OCI-LY7 (cell line): ENCODE measurements at regions of chr12 and their contacts with region 1.

Region 1: GRCh38 chr12:51341259-51342007 is 5.0 kb downstream of the CELA1 start:
- DNase-seq: peak; percentile 78
- H3K4me3 ChIP-seq: no peak overlapping the region
- H3K27ac ChIP-seq: no peak overlapping the region
- H3K4me1 ChIP-seq: peaks cover 9% of the 10 kb centered on the region
- CTCF ChIP-seq: peak; percentile 99

Region 2: GRCh38 chr12:50763639-50764285 is 577.7 kb before region 1 on chr12 and contains the start of gene ATF1:
- CTCF ChIA-PET with region 1: no interaction called
- POLR2A ChIA-PET with region 1: interaction called, 3 read pairs
- intact Hi-C with region 1: loop called (anchors 10 kb)
- DNase-seq: peak; percentile 94
- H3K4me3 ChIP-seq: peak within 1 kb of the TSS; percentile 82
- H3K27ac ChIP-seq: peak within 1 kb of the TSS; percentile 84
- H3K4me1 ChIP-seq: peaks cover 32% of the 10 kb centered on the region
- CTCF ChIP-seq: no peak
- total RNA-seq, gene ATF1: 47.4 and 83.3 TPM in 2 replicates

Region 3: DNA sequence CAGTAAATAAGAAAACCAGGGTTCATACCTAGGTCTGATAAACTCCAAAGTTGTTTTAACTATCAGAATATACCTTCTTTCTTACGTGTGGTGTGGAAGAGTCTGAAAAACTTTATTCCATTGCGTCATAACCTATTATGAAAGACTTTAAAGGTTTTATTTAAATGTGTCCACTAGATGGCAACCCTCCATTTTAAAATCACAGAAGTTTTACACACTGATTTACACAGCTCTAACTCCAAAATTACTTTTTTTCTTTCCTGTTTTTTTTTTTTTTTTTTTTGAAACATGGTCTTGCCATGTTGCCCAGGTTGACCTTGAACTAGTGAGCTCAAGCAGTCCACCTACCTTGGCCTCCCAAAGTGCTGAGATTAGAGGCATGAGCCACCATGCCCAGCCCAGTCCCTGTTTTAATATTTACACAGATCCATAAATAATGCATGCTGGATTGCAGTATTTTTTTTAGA is 516.0 kb before region 1 on chr12:
- CTCF ChIA-PET with region 1: no interaction called
- POLR2A ChIA-PET with region 1: no interaction called
- intact Hi-C with region 1: loop called (anchors 5 kb)
- DNase-seq: peak; percentile 76
- H3K4me3 ChIP-seq: no peak overlapping the region
- H3K27ac ChIP-seq: no peak overlapping the region
- H3K4me1 ChIP-seq: no peaks in the 10 kb centered on the region
- CTCF ChIP-seq: peak; percentile 77

Region 4: DNA sequence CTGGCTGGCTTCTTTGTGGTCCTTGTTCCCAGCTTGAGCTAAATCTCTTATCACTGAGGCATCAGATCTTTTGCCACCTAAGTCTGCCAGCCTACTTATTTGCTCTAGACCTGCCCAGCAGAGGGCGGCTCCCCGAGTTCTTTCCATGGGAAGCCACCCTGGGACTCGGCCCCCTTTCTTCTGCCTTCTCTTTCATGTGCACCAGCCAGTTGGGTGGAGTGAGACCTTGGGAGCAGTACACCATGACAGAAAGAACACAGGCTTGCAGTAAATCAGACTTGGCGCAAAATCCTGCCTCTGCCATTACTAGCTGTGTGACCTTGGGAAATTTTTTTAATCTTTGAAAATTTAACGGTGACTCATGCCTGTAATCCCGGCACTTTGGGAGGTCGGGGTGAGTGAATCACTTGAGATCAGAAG is 78.7 kb before region 1 on chr12:
- CTCF ChIA-PET with region 1: interaction called, 16 read pairs
- POLR2A ChIA-PET with region 1: interaction called, 6 read pairs
- intact Hi-C with region 1: loop called (anchors 1 kb)
- DNase-seq: peak; percentile 60
- H3K4me3 ChIP-seq: no peak overlapping the region
- H3K27ac ChIP-seq: no peak overlapping the region
- H3K4me1 ChIP-seq: no peaks in the 10 kb centered on the region
- CTCF ChIP-seq: peak; percentile 76

Region 5: DNA sequence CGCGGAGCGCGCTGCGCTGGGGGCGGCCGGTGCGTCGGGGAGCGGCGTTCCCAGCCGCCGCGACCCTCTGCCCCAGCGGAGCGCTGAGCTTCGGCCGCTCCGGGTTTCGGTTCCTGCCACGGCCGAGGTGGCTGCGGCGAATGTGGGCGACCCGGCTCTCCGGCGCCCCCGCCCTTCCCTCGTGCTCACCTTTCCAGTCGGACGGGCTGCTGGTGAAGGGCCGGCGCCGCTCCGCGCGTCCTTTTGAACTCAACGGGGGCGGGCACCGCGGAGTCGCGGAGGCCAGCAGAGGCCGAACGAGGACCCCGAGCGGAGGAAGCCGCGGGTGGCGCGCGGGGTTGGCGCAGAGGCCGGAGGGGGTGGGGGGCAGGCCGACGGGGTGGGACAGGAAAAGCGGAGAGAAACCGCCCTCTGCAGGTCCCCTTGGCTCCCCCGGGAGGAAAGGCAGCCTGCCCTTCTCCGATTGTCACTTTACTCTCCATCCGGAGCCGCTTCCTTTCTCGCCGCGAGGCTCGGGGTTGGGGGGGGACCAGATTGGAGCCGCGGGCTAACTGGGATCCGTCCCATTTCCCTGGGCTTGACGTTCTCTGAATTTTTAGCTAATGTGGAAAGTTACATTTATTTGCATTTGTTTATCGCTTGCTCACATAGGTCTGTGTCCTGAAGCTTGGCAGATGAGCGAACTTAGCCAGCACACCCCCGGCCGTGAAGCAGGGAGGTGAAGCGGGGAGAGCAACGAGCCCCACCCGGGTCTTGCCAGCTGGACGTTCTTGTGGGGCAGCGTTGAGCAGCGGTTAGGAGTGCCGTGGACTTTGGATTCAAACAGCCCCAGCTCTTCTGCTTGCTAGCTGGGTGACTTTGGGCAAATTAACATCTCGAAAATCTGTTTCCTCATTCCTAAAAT is 71.1 kb before region 1 on chr12 and contains the start of gene SMAGP:
- CTCF ChIA-PET with region 1: interaction called, 12 read pairs
- POLR2A ChIA-PET with region 1: interaction called, 6 read pairs
- intact Hi-C with region 1: loop called (anchors 1 kb)
- DNase-seq: peak; percentile 66
- H3K4me3 ChIP-seq: peak within 1 kb of the TSS; percentile 70
- H3K27ac ChIP-seq: no peak within 1 kb of the TSS
- H3K4me1 ChIP-seq: peaks cover 8% of the 10 kb centered on the region
- CTCF ChIP-seq: no peak; the same call in 1 of the 2 replicates
- total RNA-seq, gene SMAGP: not detected in 2 replicates